Lower leg skin (tissue), 4 donors: ENCODE measurements at regions of chr12 and their contacts with region 1.

Region 1: DNA sequence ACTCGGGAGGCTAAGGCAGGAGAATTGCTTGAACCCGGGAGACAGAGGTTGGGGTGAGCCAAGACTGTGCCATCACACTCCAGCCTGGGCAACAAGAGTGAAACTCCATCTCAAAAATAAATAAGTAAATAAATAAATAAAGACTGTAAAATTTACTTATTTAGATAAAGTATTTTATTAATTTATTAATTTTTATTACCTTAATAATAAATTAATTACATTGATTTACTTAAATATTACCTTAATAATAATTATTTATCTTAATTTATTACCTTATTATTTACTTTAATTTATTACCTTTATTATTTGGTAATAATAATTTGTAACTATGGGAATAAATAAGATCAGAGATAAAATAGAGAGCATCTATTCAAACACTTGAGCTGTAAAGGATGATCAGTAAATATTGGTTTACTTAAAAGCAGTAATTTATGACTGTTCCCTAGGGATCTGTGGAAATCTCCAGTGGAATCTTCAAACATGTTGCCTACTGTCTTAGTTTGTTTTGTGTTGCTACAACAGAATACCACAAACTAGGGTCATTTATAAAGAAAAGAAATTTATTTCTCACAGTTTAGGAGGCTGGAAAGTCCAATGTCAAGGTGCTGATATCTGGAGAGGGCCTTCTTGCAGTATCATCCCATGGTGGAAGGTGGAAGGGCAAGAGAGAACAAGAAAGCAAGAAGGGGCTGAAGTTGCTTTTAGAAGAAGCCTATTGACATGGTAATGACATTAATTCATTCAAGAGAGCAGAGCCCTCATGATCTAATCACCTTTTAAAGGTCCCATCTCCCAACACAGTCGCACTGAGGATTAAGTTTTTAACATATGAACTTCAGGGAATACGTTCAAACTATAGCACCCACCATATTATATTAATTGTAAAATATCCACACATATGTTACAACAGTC is 37.1 kb downstream of the SOCS2 start:
- DNase-seq: no peak
- H3K4me3 ChIP-seq: no peak overlapping the region
- CTCF ChIP-seq: no peak
- POLR2A ChIP-seq: no peak

Region 2: GRCh38 chr12:92898755-92899154 is 710.8 kb before region 1 on chr12:
- intact Hi-C with region 1: no loop called
- DNase-seq: no peak
- H3K4me3 ChIP-seq: no peak overlapping the region
- CTCF ChIP-seq: no peak
- POLR2A ChIP-seq: no peak

Region 3: DNA sequence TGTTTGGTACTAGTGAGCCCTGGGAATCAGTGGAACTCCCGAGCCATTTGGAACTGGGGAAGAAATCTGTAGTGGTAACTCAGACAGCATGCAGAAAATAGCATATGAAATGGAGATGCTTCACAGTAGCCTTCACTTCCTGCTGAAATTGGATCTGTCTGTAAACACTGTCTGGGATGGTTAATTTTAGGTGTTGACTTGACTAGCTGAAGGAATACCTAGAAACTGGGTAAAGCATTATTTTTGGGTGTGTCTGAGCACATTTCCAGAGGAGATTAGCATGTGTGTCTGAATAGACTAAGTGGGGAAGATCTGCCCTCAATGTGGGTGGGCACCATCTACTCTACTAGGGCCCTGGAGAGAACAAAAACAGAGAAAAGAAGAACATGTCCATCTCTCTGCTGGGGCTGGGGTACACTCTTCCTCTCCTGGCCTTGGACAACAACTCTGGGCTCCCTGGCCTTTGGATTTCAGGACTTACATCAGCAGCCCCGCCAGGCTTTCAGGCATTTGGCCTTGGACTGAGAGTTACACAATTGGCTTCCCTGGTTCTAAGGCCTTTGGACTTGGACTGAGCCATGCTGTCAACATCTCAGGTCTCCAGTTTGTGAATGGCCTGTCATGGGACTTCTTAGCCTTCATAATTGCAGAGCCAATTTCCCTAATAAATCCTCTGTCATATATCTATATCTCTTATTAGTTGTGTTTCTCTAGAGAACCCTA is 53.6 kb after region 1 on chr12:
- intact Hi-C with region 1: loop called (anchors 5 kb)
- DNase-seq: no peak
- H3K4me3 ChIP-seq: no peak overlapping the region
- CTCF ChIP-seq: no peak
- POLR2A ChIP-seq: no peak